ENCODE measurements at regions of chr16 and their contacts with region 1.

Region 1: GRCh38 chr16:23877107-23878090 is 41.6 kb downstream of the PRKCB start:
- DNase-seq: peak; percentile 39
- ATAC-seq: peak; percentile 52
- H3K4me3 ChIP-seq: no peak overlapping the region
- H3K4me3 Mint-ChIP-seq: peak overlapping the region; percentile 2
- H3K27ac ChIP-seq: peak overlapping the region; percentile 34 to 77
- H3K27ac Mint-ChIP-seq: peak overlapping the region; percentile 93
- H3K4me1 ChIP-seq: peaks cover 82 to 94% of the 10 kb centered on the region in 2 donors
- H3K4me1 Mint-ChIP-seq: peaks cover 89% of the 10 kb centered on the region
- H3K27me3 ChIP-seq: no peaks in the 10 kb centered on the region
- H3K27me3 Mint-ChIP-seq: no peaks in the 10 kb centered on the region
- CTCF ChIP-seq: peak; percentile 34

Region 2: DNA sequence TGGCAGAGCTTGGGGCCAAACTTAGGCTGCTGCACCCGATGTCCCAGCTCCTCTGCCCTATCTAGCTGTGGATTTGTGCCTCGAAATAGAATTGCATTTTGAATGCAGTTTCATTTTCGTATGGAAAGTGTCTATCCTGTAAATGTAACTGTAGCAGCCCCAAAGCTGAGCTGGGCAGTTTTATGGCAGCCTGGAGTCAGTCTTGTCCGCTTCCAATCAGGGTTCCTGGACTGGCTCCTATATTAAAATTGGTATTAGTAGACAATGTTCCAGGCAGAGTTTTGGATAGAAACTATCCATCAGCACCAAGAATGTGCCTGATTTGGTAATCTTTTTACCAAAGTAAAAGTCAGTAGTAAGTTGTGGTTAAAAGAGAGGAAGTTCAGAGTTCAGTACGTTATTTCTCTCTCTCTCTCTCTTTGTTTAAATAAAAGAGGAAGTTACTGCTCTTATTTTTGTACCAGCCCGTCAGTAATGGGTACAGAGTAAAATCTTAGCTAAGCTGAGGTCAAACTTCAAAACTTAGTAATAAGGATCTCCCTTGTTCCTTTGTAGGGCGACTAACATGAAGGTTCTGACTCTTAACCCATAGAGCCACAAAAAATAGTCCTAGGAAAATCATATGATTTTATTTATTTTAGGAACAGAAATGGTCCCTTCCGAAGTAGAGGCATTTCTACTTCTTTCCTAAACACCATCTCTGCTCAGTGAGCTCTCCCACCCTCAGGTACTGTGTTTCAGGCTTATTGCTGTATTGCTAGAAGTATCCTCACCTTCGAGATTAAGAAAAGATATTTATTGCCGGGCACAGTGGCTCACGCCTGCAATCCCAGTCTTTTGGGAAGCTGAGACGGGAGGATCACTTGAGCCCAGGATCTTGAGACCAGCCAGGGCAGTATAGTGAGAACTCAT is 13.6 kb before region 1 on chr16:
- CTCF ChIA-PET with region 1: interaction called, 21 read pairs
- POLR2A ChIA-PET with region 1: interaction called, 12 read pairs
- intact Hi-C with region 1: loop called (anchors 1 kb)
- DNase-seq: peak; percentile 82
- ATAC-seq: peak; percentile 80
- H3K4me3 ChIP-seq: peak overlapping the region; percentile 28 to 68 (median 55)
- H3K4me3 Mint-ChIP-seq: peak overlapping the region; percentile 89
- H3K27ac ChIP-seq: peak overlapping the region; percentile 54 to 76
- H3K27ac Mint-ChIP-seq: peak overlapping the region; percentile 92
- H3K4me1 ChIP-seq: peaks cover 92 to 94% of the 10 kb centered on the region in 2 donors
- H3K4me1 Mint-ChIP-seq: peaks cover 93% of the 10 kb centered on the region
- H3K27me3 ChIP-seq: no peaks in the 10 kb centered on the region
- H3K27me3 Mint-ChIP-seq: no peaks in the 10 kb centered on the region
- CTCF ChIP-seq: no peak

Region 3: DNA sequence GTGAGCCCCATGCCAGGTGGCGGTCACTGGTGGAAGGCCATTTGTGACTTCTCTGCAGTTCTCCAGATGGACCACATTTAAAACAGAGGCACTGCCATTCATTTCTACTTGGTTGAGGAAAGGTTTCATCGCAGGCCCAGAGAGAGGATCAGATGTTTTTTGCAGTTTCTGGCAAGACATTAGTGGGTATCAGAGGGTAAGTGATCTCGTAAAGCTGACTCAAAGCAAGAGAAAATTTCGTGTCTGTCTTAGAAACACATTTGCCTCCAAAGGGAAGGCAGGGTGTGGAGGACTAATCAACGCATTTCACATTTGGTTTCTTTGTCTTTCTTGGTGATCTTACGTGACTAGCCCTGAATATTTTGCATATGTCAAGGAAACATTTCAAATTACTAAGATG is 40.2 kb after region 1 on chr16:
- CTCF ChIA-PET with region 1: interaction called, 7 read pairs
- POLR2A ChIA-PET with region 1: interaction called, 8 read pairs
- intact Hi-C with region 1: loop called (anchors 2 kb)
- DNase-seq: no peak
- ATAC-seq: no peak
- H3K4me3 ChIP-seq: no peak overlapping the region
- H3K4me3 Mint-ChIP-seq: peak overlapping the region; percentile 43
- H3K27ac ChIP-seq: peak overlapping the region in 1 of 2 donors; percentile 28
- H3K27ac Mint-ChIP-seq: peak overlapping the region; percentile 86
- H3K4me1 ChIP-seq: peaks cover 69% of the 10 kb centered on the region in 2 donors
- H3K4me1 Mint-ChIP-seq: peaks cover 76% of the 10 kb centered on the region
- H3K27me3 ChIP-seq: no peaks in the 10 kb centered on the region
- H3K27me3 Mint-ChIP-seq: no peaks in the 10 kb centered on the region
- CTCF ChIP-seq: no peak

Region 4: GRCh38 chr16:23959072-23959751 is 81.8 kb after region 1 on chr16:
- CTCF ChIA-PET with region 1: interaction called, 18 read pairs
- POLR2A ChIA-PET with region 1: interaction called, 5 read pairs
- intact Hi-C with region 1: loop called (anchors 5 kb)
- DNase-seq: no peak
- ATAC-seq: peak; percentile 55
- H3K4me3 ChIP-seq: peak overlapping the region in 1 of 5 experiments; percentile 49
- H3K4me3 Mint-ChIP-seq: peak overlapping the region; percentile 59
- H3K27ac ChIP-seq: peak overlapping the region; percentile 79 to 88
- H3K27ac Mint-ChIP-seq: peak overlapping the region; percentile 87
- H3K4me1 ChIP-seq: peaks cover 81 to 84% of the 10 kb centered on the region in 2 donors
- H3K4me1 Mint-ChIP-seq: peaks cover 87% of the 10 kb centered on the region
- H3K27me3 ChIP-seq: no peaks in the 10 kb centered on the region
- H3K27me3 Mint-ChIP-seq: no peaks in the 10 kb centered on the region
- CTCF ChIP-seq: no peak

Region 5: DNA sequence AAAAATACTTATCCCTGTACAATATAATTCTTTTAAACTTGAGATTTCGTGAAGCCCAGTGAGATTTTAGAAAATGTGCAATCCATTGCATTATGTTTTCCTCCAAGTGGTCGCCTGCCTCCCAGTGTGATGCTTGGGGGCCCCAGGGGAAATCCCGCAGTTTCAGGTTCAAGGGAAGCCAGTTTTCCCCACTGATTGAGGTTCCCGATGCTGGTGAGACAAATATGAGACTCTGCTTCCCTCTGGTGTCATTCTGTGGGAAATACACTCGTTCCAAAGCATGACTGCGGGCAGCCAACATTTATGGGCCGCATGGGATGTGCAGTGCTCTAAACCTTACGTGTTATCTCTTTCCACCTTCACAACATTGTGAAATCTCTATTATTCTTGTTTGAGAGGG is 159.2 kb after region 1 on chr16:
- CTCF ChIA-PET with region 1: interaction called, 90 read pairs
- POLR2A ChIA-PET with region 1: no interaction called
- intact Hi-C with region 1: loop called (anchors 1 kb)
- DNase-seq: peak; percentile 69
- ATAC-seq: peak; percentile 33
- H3K4me3 ChIP-seq: no peak overlapping the region
- H3K4me3 Mint-ChIP-seq: peak overlapping the region; percentile 59
- H3K27ac ChIP-seq: no peak overlapping the region
- H3K27ac Mint-ChIP-seq: peak overlapping the region; percentile 73
- H3K4me1 ChIP-seq: peaks cover 27 to 34% of the 10 kb centered on the region in 2 donors
- H3K4me1 Mint-ChIP-seq: peaks cover 54% of the 10 kb centered on the region
- H3K27me3 ChIP-seq: no peaks in the 10 kb centered on the region
- H3K27me3 Mint-ChIP-seq: no peaks in the 10 kb centered on the region
- CTCF ChIP-seq: peak; percentile 84

Measured in B cell (primary cell).